CD4-positive, alpha-beta memory T cell (primary cell): ENCODE measurements at regions of chr11 and their contacts with region 1.

Region 1: GRCh38 chr11:66311965-66312548 is 4.8 kb downstream of the CD248 start:
- DNase-seq: peak; percentile 97 to 99 (median 98)
- H3K4me3 ChIP-seq: peak overlapping the region; percentile 43 to 88
- H3K4me3 Mint-ChIP-seq: peak overlapping the region; percentile 89 to 97 (median 94)
- H3K27ac ChIP-seq: peak overlapping the region; percentile 62
- H3K27ac Mint-ChIP-seq: peak overlapping the region; percentile 93 to 100 (median 99)
- H3K4me1 ChIP-seq: peaks cover 22% of the 10 kb centered on the region
- H3K4me1 Mint-ChIP-seq: peaks cover 4 to 20% (median 8%) of the 10 kb centered on the region in 4 donors
- H3K27me3 ChIP-seq: no peaks in the 10 kb centered on the region
- H3K27me3 Mint-ChIP-seq: peaks cover 2 to 3% of the 10 kb centered on the region in 2 donors

Region 2: GRCh38 chr11:66268283-66268951 is 43.6 kb before region 1 on chr11 and contains the start of gene RAB1B:
- CTCF ChIA-PET with region 1: interaction called, 7 read pairs
- POLR2A ChIA-PET with region 1: interaction called, 10 read pairs
- intact Hi-C with region 1: loop called (anchors 1 kb)
- DNase-seq: peak; percentile 99 to 100 (median 100)
- H3K4me3 ChIP-seq: peak within 1 kb of the TSS; percentile 62 to 84
- H3K4me3 Mint-ChIP-seq: peak within 1 kb of the TSS; percentile 92 to 99 (median 94)
- H3K27ac ChIP-seq: peak within 1 kb of the TSS; percentile 88
- H3K27ac Mint-ChIP-seq: peak within 1 kb of the TSS; percentile 94 to 100 (median 98)
- H3K4me1 ChIP-seq: peaks cover 48% of the 10 kb centered on the region
- H3K4me1 Mint-ChIP-seq: peaks cover 23 to 57% (median 39%) of the 10 kb centered on the region in 4 donors
- H3K27me3 ChIP-seq: no peaks in the 10 kb centered on the region
- H3K27me3 Mint-ChIP-seq: no peaks in the 10 kb centered on the region
- total RNA-seq, gene RAB1B: 76.4 to 79.4 TPM

Region 3: DNA sequence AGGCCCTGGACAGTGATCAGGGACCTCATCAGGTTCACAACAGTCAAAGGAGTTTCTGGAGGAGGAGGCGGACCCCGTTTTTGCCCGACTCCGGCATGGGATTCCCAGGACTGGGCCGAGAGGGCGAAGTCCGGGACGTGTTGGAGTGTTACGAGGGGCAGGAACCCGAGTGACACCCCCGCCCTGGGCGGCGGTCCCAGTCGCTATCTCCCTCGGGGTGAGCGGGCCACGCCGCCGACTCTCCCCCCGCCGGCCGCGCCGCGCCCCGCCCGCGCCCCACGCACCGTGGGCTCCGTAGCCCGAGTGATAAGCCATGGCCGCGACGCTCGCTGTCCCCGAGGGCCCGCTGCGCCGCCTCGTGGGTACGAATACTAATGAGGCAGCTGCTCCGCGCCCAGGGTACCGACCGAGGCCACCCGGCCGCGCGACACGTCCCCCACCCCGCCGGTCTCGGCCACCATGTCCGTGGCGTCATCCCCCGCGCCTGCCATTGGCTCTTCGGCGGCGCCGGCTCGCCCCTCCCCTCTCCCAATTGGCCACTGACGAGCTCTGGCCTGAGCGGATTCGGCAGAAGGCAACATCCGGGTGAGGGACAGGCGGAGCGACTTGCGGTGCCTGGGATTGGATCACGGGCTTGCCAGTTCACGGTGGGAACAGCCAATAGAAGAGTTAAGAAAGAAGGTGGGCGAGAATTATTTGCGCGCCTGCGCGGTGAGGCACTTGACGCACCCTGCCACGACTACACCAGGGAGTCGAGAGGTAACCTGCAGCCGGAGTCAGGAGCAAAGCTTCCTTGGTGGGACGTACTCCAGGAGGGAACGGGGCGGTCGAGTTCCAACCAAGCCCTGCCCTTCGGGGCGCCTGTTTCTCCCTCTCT is 23.1 kb before region 1 on chr11 and contains the start of gene YIF1A:
- CTCF ChIA-PET with region 1: interaction called, 29 read pairs
- POLR2A ChIA-PET with region 1: interaction called, 53 read pairs
- intact Hi-C with region 1: loop called (anchors 1 kb)
- DNase-seq: peak; percentile 98 to 100 (median 99)
- H3K4me3 ChIP-seq: peak within 1 kb of the TSS; percentile 70 to 84
- H3K4me3 Mint-ChIP-seq: peak within 1 kb of the TSS; percentile 87 to 96 (median 92)
- H3K27ac ChIP-seq: peak within 1 kb of the TSS; percentile 88
- H3K27ac Mint-ChIP-seq: peak within 1 kb of the TSS; percentile 83 to 98 (median 96)
- H3K4me1 ChIP-seq: peaks cover 39% of the 10 kb centered on the region
- H3K4me1 Mint-ChIP-seq: peaks cover 16 to 49% (median 29%) of the 10 kb centered on the region in 4 donors
- H3K27me3 ChIP-seq: no peaks in the 10 kb centered on the region
- H3K27me3 Mint-ChIP-seq: peaks cover 10 to 14% of the 10 kb centered on the region in 2 donors
- total RNA-seq, gene YIF1A: 40.4 to 45.1 TPM

Region 4: DNA sequence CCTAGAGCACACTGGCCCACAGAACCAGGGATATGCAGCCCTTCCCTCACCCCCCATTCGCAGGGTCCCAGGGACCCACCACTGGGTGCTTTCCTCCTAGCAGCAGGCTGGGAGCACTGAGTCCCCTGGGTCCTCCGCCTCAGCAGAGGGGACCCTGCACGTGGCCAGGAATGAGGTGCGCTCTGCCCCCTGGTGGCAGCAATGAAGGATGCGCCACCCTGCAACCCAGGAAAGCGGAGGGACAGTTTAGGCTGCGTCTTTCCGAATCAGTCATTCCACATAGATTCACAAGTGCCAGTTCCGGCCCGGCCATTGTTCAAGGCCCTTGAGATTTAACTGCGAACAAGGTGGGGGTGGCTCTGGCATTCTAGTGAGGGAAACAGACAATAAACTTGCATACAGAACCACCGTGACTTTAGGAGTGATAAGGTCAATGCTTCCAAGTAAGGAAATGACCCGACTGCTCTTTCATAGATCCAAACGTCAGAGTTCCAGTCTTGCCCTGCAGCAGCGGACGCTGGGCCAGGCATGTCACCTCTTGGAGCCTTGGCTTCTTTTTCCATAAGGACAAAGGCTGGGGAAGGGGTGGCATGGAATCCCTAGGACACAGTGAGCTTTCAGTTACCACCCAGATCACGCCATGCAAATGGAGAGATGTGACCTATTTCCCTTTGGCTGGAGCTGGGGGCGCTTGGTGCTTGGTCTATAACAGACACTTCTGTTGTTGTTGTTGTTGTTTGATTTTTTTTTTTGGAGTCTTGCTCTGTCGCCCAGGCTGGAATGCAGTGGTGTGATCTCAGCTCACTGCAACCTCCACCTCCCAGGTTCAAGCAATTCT is 16.5 kb after region 1 on chr11:
- CTCF ChIA-PET with region 1: interaction called, 110 read pairs
- POLR2A ChIA-PET with region 1: interaction called, 32 read pairs
- intact Hi-C with region 1: loop called (anchors 1 kb)
- DNase-seq: peak; percentile 70 to 82 (median 77)
- H3K4me3 ChIP-seq: no peak overlapping the region
- H3K4me3 Mint-ChIP-seq: peak overlapping the region in 7 of 8 donors; percentile 16 to 77 (median 35)
- H3K27ac ChIP-seq: no peak overlapping the region
- H3K27ac Mint-ChIP-seq: peak overlapping the region in 6 of 7 donors; percentile 57 to 91 (median 66)
- H3K4me1 ChIP-seq: peaks cover 29% of the 10 kb centered on the region
- H3K4me1 Mint-ChIP-seq: peaks cover 18 to 27% (median 21%) of the 10 kb centered on the region in 4 donors
- H3K27me3 ChIP-seq: no peaks in the 10 kb centered on the region
- H3K27me3 Mint-ChIP-seq: no peaks in the 10 kb centered on the region

Region 5: GRCh38 chr11:66344550-66345315 is 32.7 kb after region 1 on chr11 and contains the start of gene BRMS1:
- CTCF ChIA-PET with region 1: interaction called, 47 read pairs
- POLR2A ChIA-PET with region 1: interaction called, 37 read pairs
- intact Hi-C with region 1: loop called (anchors 1 kb)
- DNase-seq: peak; percentile 92 to 99 (median 93)
- H3K4me3 ChIP-seq: peak within 1 kb of the TSS; percentile 79 to 99
- H3K4me3 Mint-ChIP-seq: peak within 1 kb of the TSS; percentile 90 to 99 (median 97)
- H3K27ac ChIP-seq: peak within 1 kb of the TSS; percentile 84
- H3K27ac Mint-ChIP-seq: peak within 1 kb of the TSS; percentile 95 to 99 (median 98)
- H3K4me1 ChIP-seq: peaks cover 45% of the 10 kb centered on the region
- H3K4me1 Mint-ChIP-seq: peaks cover 31 to 62% (median 41%) of the 10 kb centered on the region in 4 donors
- H3K27me3 ChIP-seq: no peaks in the 10 kb centered on the region
- H3K27me3 Mint-ChIP-seq: peaks cover 1 to 4% of the 10 kb centered on the region in 2 donors
- total RNA-seq, gene BRMS1: 49.8 to 50.8 TPM

Region 6: GRCh38 chr11:66386171-66387069 is 74.4 kb after region 1 on chr11:
- CTCF ChIA-PET with region 1: interaction called, 63 read pairs
- POLR2A ChIA-PET with region 1: interaction called, 13 read pairs
- intact Hi-C with region 1: loop called (anchors 1 kb)
- DNase-seq: peak; percentile 70 to 81 (median 76)
- H3K4me3 ChIP-seq: peak overlapping the region in 1 of 2 donors; percentile 31
- H3K4me3 Mint-ChIP-seq: peak overlapping the region in 7 of 8 donors; percentile 6 to 40 (median 12)
- H3K27ac ChIP-seq: no peak overlapping the region
- H3K27ac Mint-ChIP-seq: peak overlapping the region in 3 of 7 donors; percentile 6 to 78 (median 35)
- H3K4me1 ChIP-seq: peaks cover 7% of the 10 kb centered on the region
- H3K4me1 Mint-ChIP-seq: peaks cover 6 to 9% (median 7%) of the 10 kb centered on the region in 4 donors
- H3K27me3 ChIP-seq: no peaks in the 10 kb centered on the region
- H3K27me3 Mint-ChIP-seq: peaks cover 4 to 8% of the 10 kb centered on the region in 2 donors

Region 7: GRCh38 chr11:66625041-66625751 is 313.1 kb after region 1 on chr11:
- CTCF ChIA-PET with region 1: no interaction called
- POLR2A ChIA-PET with region 1: no interaction called
- intact Hi-C with region 1: no loop called
- DNase-seq: no peak
- H3K4me3 ChIP-seq: no peak overlapping the region
- H3K4me3 Mint-ChIP-seq: no peak overlapping the region
- H3K27ac ChIP-seq: no peak overlapping the region
- H3K27ac Mint-ChIP-seq: peak overlapping the region in 2 of 7 donors; percentile 29 to 71
- H3K4me1 ChIP-seq: peaks cover 62% of the 10 kb centered on the region
- H3K4me1 Mint-ChIP-seq: peaks cover 44 to 90% (median 67%) of the 10 kb centered on the region in 4 donors
- H3K27me3 ChIP-seq: no peaks in the 10 kb centered on the region
- H3K27me3 Mint-ChIP-seq: no peaks in the 10 kb centered on the region